AG04450 (cell line): ENCODE measurements at regions of chr5 and their contacts with region 1.

Region 1: DNA sequence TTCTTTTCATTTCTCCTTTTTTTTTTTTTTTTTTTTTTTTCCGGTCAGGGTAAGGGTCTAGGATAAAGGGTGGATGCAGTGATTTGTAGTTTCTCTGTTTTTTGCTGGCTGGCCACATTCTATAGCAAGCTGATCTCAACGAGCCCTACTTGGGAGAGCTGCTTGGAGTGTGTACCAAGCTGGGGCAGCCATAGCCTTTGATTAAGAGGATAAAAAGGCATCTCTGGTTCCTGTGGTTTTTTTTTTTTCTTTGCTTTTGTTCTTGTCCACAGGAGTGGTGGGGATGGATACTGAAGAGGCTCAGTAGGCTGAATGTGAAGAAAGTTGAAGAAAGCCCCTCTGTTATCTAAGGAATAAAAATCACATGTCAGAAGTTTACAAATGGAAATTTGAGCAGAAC is 955.3 kb upstream of the WWC1 start:
- DNase-seq: no peak
- H3K4me3 ChIP-seq: no peak overlapping the region
- H3K27ac ChIP-seq: no peak overlapping the region
- H3K27me3 ChIP-seq: no peaks in the 10 kb centered on the region
- CTCF ChIP-seq: no peak

Region 2: GRCh38 chr5:167511276-167511675 is 175.1 kb after region 1 on chr5:
- CTCF ChIA-PET with region 1: interaction called, 11 read pairs
- POLR2A ChIA-PET with region 1: no interaction called
- DNase-seq: no peak
- H3K4me3 ChIP-seq: no peak overlapping the region
- H3K27ac ChIP-seq: no peak overlapping the region
- H3K27me3 ChIP-seq: no peaks in the 10 kb centered on the region
- CTCF ChIP-seq: no peak